ENCODE measurements at regions of chr11 and their contacts with region 1.

Region 1: GRCh38 chr11:65512306-65512705 is 12.6 kb upstream of the SCYL1 start:
- DNase-seq: peak in 3 of 10 donors; percentile 8 to 23 (median 17)
- H3K4me3 ChIP-seq: no peak overlapping the region
- H3K27ac ChIP-seq: no peak overlapping the region
- H3K27me3 ChIP-seq: no peaks in the 10 kb centered on the region
- CTCF ChIP-seq: no peak

Region 2: DNA sequence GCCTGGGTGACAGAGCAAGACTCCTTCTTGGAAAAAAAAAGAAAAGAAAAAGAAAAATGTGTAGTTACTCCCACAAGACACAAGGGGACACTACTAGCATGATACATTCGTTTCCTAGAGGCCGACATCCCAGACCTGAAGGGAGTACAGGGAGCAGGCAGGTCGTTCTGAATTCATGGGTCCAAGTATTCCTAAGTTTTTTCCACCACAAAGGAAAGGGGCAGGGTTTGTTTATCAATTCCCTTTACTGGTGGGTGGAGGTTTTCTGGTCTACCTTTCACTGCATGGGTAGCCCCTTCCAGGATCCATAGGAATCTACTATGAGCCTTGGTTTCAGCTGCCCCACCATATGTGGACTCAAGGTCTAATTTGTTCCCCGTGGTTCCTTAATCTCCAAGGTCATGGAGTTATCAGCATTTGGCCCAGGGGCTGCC is 145.9 kb before region 1 on chr11:
- intact Hi-C with region 1: loop called in 1 of 2 experiments (anchors 5 kb)
- DNase-seq: peak in 2 of 10 donors; percentile 35 to 52
- H3K4me3 ChIP-seq: peak overlapping the region in 1 of 59 donors; percentile 11
- H3K27ac ChIP-seq: peak overlapping the region in 1 of 59 donors; percentile 3
- H3K27me3 ChIP-seq: no peaks in the 10 kb centered on the region
- CTCF ChIP-seq: peak; percentile 53 to 85 (median 76)

Region 3: GRCh38 chr11:65382033-65382807 is 130.1 kb before region 1 on chr11 and contains the start of gene SLC25A45:
- intact Hi-C with region 1: loop called (anchors 2 to 5 kb)
- DNase-seq: peak; percentile 63 to 96 (median 90)
- H3K4me3 ChIP-seq: peak within 1 kb of the TSS; percentile 34 to 70 (median 52)
- H3K27ac ChIP-seq: peak within 1 kb of the TSS; percentile 90 to 100 (median 99)
- H3K27me3 ChIP-seq: no peaks in the 10 kb centered on the region
- CTCF ChIP-seq: peak; percentile 55 to 98 (median 90)
- total RNA-seq, gene SLC25A45: 3.6 to 18.2 (median 9.0) TPM

Measured in dorsolateral prefrontal cortex (tissue), 120 donors.